Caco-2 (cell line): ENCODE measurements at regions of chr16 and their contacts with region 1.

Region 1: DNA sequence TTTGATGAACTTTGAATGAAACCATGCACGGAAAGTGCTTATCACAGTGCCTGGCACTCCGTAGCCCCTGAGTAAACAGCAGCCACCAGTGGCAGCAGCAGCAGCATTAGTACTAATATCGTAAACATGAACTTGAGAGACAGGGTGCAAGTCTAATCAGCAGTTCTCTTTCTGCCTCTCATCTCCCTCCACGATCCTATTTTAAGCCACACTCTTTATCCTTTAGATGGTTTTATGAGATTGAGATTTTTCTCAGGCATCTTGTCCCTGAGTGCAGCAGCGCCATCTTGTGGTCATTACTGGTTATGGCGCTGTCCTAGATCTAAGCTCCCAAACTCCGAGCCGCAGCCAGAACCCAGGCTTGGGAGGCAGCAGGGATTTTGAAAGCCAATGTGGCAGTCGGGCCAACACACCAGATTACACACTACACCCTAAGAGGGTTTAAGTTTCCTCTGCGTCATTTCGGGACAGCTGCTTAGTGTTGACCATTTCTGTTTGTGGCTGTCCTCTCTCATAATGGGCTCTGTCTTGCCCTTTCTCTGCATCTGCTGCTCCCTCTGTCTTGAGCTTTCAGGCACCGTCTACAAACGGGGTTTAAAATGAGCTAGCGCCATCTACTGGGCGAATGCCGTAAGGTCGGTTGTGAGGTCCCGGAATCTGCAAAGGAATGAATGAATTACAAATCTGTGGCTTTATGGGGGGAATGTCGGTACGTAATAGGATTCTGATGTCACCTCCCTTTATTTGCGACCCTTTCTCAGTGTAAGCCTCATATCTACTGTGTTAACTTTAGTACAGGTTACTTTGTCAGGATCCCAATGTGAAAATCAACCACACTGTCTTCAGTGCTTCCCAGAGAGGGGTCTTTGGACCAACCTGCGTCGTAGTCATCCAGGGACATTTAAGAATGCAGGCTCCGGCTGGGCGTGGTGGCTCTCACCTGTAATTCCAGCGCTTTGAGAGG is 64.5 kb downstream of the CYLD start:
- DNase-seq: peak; percentile 85 to 88
- H3K4me3 ChIP-seq: peak overlapping the region; percentile 13
- H3K4me3 Mint-ChIP-seq: peak overlapping the region; percentile 67
- H3K27ac Mint-ChIP-seq: no peak overlapping the region
- H3K4me1 ChIP-seq: peaks cover 5% of the 10 kb centered on the region; the same call in 1 of the 2 replicates
- H3K4me1 Mint-ChIP-seq: no peaks in the 10 kb centered on the region
- H3K27me3 ChIP-seq: no peaks in the 10 kb centered on the region
- H3K27me3 Mint-ChIP-seq: peaks cover 3% of the 10 kb centered on the region
- CTCF ChIP-seq: peak; percentile 95 to 96

Region 2: GRCh38 chr16:50368410-50369132 is 437.8 kb before region 1 on chr16 and contains the start of gene BRD7:
- CTCF ChIA-PET with region 1: interaction called, 26 read pairs
- POLR2A ChIA-PET with region 1: no interaction called
- intact Hi-C with region 1: no loop called
- DNase-seq: peak in 1 of 2 experiments; percentile 86
- H3K4me3 ChIP-seq: peak within 1 kb of the TSS; percentile 55
- H3K4me3 Mint-ChIP-seq: peak within 1 kb of the TSS; percentile 90
- H3K27ac Mint-ChIP-seq: peak within 1 kb of the TSS; percentile 72
- H3K4me1 ChIP-seq: peaks cover 20% of the 10 kb centered on the region
- H3K4me1 Mint-ChIP-seq: peaks cover 30% of the 10 kb centered on the region
- H3K27me3 ChIP-seq: no peaks in the 10 kb centered on the region
- H3K27me3 Mint-ChIP-seq: no peaks in the 10 kb centered on the region
- CTCF ChIP-seq: peak; percentile 43 to 69
- total RNA-seq, gene BRD7: 147 and 170 TPM in 2 replicates

Region 3: DNA sequence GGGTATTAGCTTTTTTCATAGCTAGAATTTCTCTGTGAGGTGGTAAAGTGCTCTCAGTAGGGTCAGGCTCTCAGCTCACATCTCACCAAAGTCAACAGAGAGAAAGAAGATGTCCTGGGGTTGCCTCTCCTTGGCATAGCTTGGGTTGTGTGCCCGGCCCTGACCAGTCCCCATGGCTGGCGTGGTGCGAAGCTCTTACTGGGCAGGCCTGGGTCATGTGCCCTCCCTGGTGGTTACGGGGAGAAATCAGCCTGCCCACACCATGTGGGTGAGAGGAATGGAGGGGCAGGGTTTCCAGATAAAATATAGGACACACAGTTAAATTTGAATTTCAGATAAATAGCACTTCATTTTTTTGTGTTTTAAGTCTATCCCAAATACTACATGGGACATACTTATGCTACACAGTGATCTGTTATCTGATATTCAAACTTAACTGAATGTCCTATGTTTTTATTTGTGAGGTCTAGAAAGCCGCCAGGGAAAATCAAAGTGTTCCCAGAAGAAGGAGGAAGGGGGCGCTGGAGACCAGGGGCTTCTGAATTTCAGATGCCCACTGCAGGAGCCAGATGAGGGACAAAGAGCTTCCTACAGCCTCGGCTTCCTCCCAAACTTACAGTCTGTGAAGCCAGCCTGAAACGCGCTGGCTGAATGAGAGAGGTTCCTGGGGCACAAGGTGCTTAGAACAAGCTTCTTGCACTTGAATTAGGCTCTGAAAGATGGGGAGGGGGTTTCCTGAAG is 212.8 kb before region 1 on chr16:
- CTCF ChIA-PET with region 1: interaction called, 16 read pairs
- POLR2A ChIA-PET with region 1: no interaction called
- intact Hi-C with region 1: no loop called
- DNase-seq: no peak
- H3K4me3 ChIP-seq: no peak overlapping the region
- H3K4me3 Mint-ChIP-seq: no peak overlapping the region
- H3K27ac Mint-ChIP-seq: no peak overlapping the region
- H3K4me1 ChIP-seq: no peaks in the 10 kb centered on the region
- H3K4me1 Mint-ChIP-seq: no peaks in the 10 kb centered on the region
- H3K27me3 ChIP-seq: no peaks in the 10 kb centered on the region
- H3K27me3 Mint-ChIP-seq: no peaks in the 10 kb centered on the region
- CTCF ChIP-seq: peak in 1 of 2 experiments; percentile 26

Region 4: GRCh38 chr16:50719518-50720337 is 86.7 kb before region 1 on chr16:
- CTCF ChIA-PET with region 1: interaction called, 14 read pairs
- POLR2A ChIA-PET with region 1: no interaction called
- intact Hi-C with region 1: no loop called
- DNase-seq: peak; percentile 19 to 79
- H3K4me3 ChIP-seq: peak overlapping the region; percentile 16; the same call in 1 of the 2 replicates
- H3K4me3 Mint-ChIP-seq: peak overlapping the region; percentile 50
- H3K27ac Mint-ChIP-seq: peak overlapping the region; percentile 48
- H3K4me1 ChIP-seq: peaks cover 24% of the 10 kb centered on the region
- H3K4me1 Mint-ChIP-seq: peaks cover 20% of the 10 kb centered on the region
- H3K27me3 ChIP-seq: no peaks in the 10 kb centered on the region
- H3K27me3 Mint-ChIP-seq: no peaks in the 10 kb centered on the region
- CTCF ChIP-seq: peak in 1 of 2 experiments; percentile 1

Region 5: DNA sequence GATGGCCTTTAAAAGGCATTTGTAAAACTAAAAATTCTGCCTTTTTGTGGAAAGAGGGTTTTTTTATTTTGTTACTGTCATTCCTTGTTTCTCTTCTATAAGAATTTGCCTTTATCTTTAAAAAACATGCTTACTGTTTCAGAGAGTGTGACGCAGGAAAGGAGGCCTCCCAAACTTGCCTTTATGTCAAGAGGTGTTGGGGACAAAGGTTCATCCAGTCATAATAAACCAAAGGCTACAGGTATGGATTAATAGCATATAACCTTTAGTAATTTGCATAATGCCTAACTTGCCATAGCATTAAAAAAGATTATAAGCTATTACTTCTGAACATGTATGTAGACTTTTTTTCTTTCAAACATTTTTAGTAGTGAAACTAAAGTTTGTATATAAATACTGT is 30.3 kb before region 1 on chr16:
- CTCF ChIA-PET with region 1: interaction called, 10 read pairs
- POLR2A ChIA-PET with region 1: no interaction called
- intact Hi-C with region 1: no loop called
- DNase-seq: no peak
- H3K4me3 ChIP-seq: no peak overlapping the region
- H3K4me3 Mint-ChIP-seq: no peak overlapping the region
- H3K27ac Mint-ChIP-seq: no peak overlapping the region
- H3K4me1 ChIP-seq: no peaks in the 10 kb centered on the region
- H3K4me1 Mint-ChIP-seq: peaks cover 12% of the 10 kb centered on the region
- H3K27me3 ChIP-seq: no peaks in the 10 kb centered on the region
- H3K27me3 Mint-ChIP-seq: no peaks in the 10 kb centered on the region
- CTCF ChIP-seq: no peak

Region 6: GRCh38 chr16:50841081-50841886 is 34.9 kb after region 1 on chr16:
- CTCF ChIA-PET with region 1: no interaction called
- POLR2A ChIA-PET with region 1: no interaction called
- intact Hi-C with region 1: no loop called
- DNase-seq: no peak
- H3K4me3 ChIP-seq: no peak overlapping the region
- H3K4me3 Mint-ChIP-seq: no peak overlapping the region
- H3K27ac Mint-ChIP-seq: no peak overlapping the region
- H3K4me1 ChIP-seq: no peaks in the 10 kb centered on the region
- H3K4me1 Mint-ChIP-seq: no peaks in the 10 kb centered on the region
- H3K27me3 ChIP-seq: no peaks in the 10 kb centered on the region
- H3K27me3 Mint-ChIP-seq: peaks cover 11% of the 10 kb centered on the region
- CTCF ChIP-seq: no peak

Region 7: DNA sequence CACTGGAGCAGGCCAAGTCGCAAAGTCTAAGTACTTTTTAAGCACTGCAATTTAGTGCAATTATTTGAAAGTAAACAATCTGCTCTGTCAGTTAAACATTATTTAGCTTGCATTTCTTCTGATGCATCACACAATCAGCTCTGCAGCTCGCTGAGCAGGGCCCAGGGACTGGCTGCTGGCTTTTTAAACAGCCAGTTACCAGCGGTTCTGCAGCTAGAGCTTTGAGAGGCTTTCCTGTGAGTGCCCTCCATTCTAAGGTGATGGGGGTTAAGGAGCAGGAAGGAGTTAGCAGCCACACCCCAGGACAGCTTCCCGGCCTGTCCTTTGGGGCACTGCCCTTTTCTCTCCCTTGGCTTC is 190.4 kb after region 1 on chr16:
- CTCF ChIA-PET with region 1: no interaction called
- POLR2A ChIA-PET with region 1: no interaction called
- intact Hi-C with region 1: no loop called
- DNase-seq: no peak
- H3K4me3 ChIP-seq: no peak overlapping the region
- H3K4me3 Mint-ChIP-seq: no peak overlapping the region
- H3K27ac Mint-ChIP-seq: no peak overlapping the region
- H3K4me1 ChIP-seq: no peaks in the 10 kb centered on the region
- H3K4me1 Mint-ChIP-seq: no peaks in the 10 kb centered on the region
- H3K27me3 ChIP-seq: no peaks in the 10 kb centered on the region; the same call in 1 of the 2 replicates
- H3K27me3 Mint-ChIP-seq: peaks cover 3% of the 10 kb centered on the region
- CTCF ChIP-seq: no peak